ENCODE measurements at regions of chr13 and their contacts with region 1.

Region 1: GRCh38 chr13:99269627-99270241 is 11.6 kb upstream of the GPR18 start:
- DNase-seq: peak; percentile 36
- H3K4me3 ChIP-seq: no peak overlapping the region
- H3K27ac ChIP-seq: no peak overlapping the region
- H3K27me3 ChIP-seq: no peaks in the 10 kb centered on the region
- CTCF ChIP-seq: peak; percentile 84

Region 2: DNA sequence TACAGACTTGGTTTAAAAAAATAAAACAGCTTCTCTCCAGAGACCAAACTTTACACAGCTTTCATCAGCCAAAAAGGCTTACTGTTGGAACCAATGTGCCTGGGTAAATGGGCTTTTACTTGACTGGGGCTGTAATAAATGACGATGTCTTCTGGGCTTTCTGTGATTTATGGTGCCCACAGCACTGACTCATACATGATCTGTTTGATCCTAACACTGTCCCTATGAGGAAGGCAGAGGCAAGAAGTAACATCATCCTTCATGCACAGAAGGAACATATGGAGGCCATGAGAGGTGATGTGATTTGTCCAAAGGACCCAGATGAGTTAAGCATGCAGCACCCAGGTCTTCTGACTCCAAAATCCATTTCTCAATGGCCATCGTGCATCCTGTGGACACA is 369.3 kb before region 1 on chr13:
- CTCF ChIA-PET with region 1: no interaction called
- POLR2A ChIA-PET with region 1: no interaction called
- DNase-seq: no peak
- H3K4me3 ChIP-seq: no peak overlapping the region
- H3K27ac ChIP-seq: no peak overlapping the region
- H3K27me3 ChIP-seq: no peaks in the 10 kb centered on the region
- CTCF ChIP-seq: no peak

Region 3: GRCh38 chr13:99182439-99182838 is 87.3 kb before region 1 on chr13:
- CTCF ChIA-PET with region 1: interaction called, 241 read pairs
- POLR2A ChIA-PET with region 1: interaction called, 3 read pairs
- DNase-seq: no peak
- H3K4me3 ChIP-seq: no peak overlapping the region
- H3K27ac ChIP-seq: no peak overlapping the region
- H3K27me3 ChIP-seq: peaks cover 13% of the 10 kb centered on the region
- CTCF ChIP-seq: no peak

Region 4: GRCh38 chr13:99237981-99238662 is 31.6 kb before region 1 on chr13:
- CTCF ChIA-PET with region 1: interaction called, 10 read pairs
- POLR2A ChIA-PET with region 1: no interaction called
- DNase-seq: no peak
- H3K4me3 ChIP-seq: no peak overlapping the region
- H3K27ac ChIP-seq: no peak overlapping the region
- H3K27me3 ChIP-seq: no peaks in the 10 kb centered on the region
- CTCF ChIP-seq: no peak

Region 5: GRCh38 chr13:99281811-99282263 is 12.1 kb after region 1 on chr13:
- CTCF ChIA-PET with region 1: interaction called, 39 read pairs
- POLR2A ChIA-PET with region 1: no interaction called
- DNase-seq: no peak
- H3K4me3 ChIP-seq: no peak overlapping the region
- H3K27ac ChIP-seq: no peak overlapping the region
- H3K27me3 ChIP-seq: no peaks in the 10 kb centered on the region
- CTCF ChIP-seq: no peak

Region 6: DNA sequence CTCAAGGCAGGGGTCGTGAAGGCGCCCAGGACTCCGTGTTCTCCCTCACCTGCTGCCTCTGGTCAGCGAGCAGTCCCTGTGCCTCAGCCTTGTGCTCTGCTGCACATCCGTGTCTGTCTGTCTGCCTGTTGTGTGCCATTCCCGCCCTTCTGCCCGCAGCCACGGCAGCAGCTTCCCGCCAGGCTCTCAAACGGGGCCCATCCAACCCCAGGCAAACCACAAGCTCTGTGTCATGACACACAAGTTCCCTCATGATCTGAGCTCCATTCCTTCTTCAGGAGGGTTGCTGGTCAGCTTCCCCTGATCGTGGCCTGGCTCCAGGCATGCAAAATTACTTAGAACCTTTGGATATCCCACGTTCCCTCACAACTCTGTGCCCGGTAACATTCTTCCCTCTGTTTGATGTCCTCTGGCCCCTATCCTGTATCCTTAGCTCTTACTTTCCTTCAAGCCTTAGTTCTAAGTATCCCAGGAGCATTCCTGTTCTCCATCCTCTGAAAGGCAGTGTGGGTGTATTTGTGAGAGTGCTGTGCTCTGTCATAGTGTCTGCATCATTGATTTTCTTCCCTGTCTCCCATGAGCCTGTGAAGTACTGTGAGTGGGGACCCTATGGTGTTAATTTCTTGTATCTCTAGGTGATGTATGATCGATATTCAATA is 34.3 kb after region 1 on chr13:
- CTCF ChIA-PET with region 1: interaction called, 12 read pairs
- POLR2A ChIA-PET with region 1: no interaction called
- DNase-seq: no peak
- H3K4me3 ChIP-seq: no peak overlapping the region
- H3K27ac ChIP-seq: no peak overlapping the region
- H3K27me3 ChIP-seq: no peaks in the 10 kb centered on the region
- CTCF ChIP-seq: no peak

Region 7: GRCh38 chr13:99501184-99501847 is 231.6 kb after region 1 on chr13 and contains the start of gene TM9SF2:
- CTCF ChIA-PET with region 1: interaction called, 25 read pairs
- POLR2A ChIA-PET with region 1: no interaction called
- DNase-seq: peak; percentile 95
- H3K4me3 ChIP-seq: peak within 1 kb of the TSS; percentile 94
- H3K27ac ChIP-seq: peak within 1 kb of the TSS; percentile 42
- H3K27me3 ChIP-seq: no peaks in the 10 kb centered on the region
- CTCF ChIP-seq: no peak
- polyA plus RNA-seq, gene TM9SF2: 86.2 and 125 TPM in 2 replicates